H1 (cell line): ENCODE measurements at regions of chr1 and their contacts with region 1.

Region 1: GRCh38 chr1:90616395-90616794 is 100.7 kb downstream of the BARHL2 start:
- DNase-seq: peak; percentile 25 to 69
- H3K4me3 ChIP-seq: no peak overlapping the region
- H3K27ac ChIP-seq: no peak overlapping the region
- H3K4me1 ChIP-seq: peaks cover 0 to 8% (median 3%) of the 10 kb centered on the region in 4 experiments; a peak in 2 of 7 replicates
- H3K27me3 ChIP-seq: no peaks in the 10 kb centered on the region; a peak in 1 of 7 replicates
- CTCF ChIP-seq: peak; percentile 63 to 75 (median 66)
- EP300 ChIP-seq: no peak
- POLR2A ChIP-seq: no peak
- RAD21 ChIP-seq: peak; percentile 65 to 72

Region 2: DNA sequence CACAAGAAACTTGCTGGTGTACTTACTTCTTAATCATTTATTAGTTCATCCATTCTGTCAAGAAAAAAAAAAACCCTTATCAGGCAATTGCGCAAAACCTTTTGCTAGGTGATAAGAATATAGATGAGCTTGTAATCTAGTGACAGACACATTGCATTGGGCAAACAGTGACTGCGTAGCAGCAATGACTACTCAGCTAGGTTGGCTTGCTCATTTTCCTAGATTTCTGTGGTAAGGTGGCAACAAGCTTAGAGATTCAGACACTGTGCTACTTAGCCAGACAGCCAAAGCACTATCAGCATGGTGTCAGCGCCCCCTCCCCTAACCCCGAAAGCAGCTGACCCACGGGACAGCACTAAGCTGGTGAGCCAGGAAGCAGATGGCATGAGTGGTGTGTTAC is 102.4 kb before region 1 on chr1:
- CTCF ChIA-PET with region 1: no interaction called
- POLR2A ChIA-PET with region 1: no interaction called
- DNase-seq: no peak
- H3K4me3 ChIP-seq: no peak overlapping the region
- H3K27ac ChIP-seq: no peak overlapping the region
- H3K4me1 ChIP-seq: no peaks in the 10 kb centered on the region; a peak in 2 of 7 replicates
- H3K27me3 ChIP-seq: no peaks in the 10 kb centered on the region
- CTCF ChIP-seq: no peak
- EP300 ChIP-seq: no peak
- POLR2A ChIP-seq: no peak
- RAD21 ChIP-seq: no peak

Region 3: DNA sequence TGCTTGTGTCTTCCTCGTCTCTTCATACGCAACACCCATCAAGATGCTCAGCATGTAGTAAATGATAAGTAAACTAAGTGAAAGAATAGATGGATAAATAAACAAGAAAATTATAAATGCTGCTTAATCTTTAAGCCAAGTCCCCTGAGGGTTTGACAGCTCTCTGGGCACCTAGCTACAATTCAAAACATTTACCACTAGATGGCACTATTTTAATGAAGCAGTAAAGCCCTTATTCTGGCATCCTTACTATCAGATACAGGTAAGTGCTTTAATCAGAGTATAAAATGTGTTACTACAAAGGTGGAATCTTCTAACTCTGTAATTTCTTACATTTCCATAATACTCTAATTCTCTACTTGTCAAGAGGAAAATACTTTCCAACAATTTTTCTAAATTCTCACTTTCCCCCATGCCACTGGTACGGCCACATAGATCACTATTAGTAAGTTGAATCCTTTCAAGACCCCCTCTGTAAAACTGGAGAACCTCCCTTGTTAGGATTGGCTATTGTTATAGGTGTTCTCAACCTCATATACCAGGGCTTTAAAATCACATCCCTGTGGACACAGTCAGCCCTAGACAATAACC is 37.1 kb before region 1 on chr1:
- CTCF ChIA-PET with region 1: interaction called, 10 read pairs
- POLR2A ChIA-PET with region 1: no interaction called
- DNase-seq: no peak
- H3K4me3 ChIP-seq: no peak overlapping the region
- H3K27ac ChIP-seq: no peak overlapping the region
- H3K4me1 ChIP-seq: no peaks in the 10 kb centered on the region
- H3K27me3 ChIP-seq: no peaks in the 10 kb centered on the region
- CTCF ChIP-seq: peak in 2 of 3 experiments; percentile 42 to 60; a peak in 2 of 4 replicates
- EP300 ChIP-seq: no peak
- POLR2A ChIP-seq: no peak
- RAD21 ChIP-seq: peak; percentile 47 to 53

Region 4: DNA sequence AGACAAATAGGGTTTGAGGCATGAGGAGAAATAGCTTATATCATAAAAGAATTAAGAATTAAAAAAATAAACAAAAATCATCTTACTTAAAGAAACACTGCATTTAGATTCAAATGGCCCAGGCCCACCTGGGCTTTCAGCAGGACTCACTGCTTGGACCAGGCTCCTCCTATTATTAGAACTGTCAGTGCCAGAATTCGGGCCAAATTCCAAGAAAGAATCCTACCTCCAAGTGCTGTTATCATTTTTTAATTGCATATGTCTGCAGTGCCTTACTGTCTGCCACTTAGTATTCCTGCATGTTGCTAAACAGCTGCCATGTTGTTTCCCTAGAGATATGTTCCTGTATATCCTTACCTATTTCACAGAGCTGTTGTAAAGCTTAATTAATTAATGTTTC is 11.3 kb before region 1 on chr1:
- CTCF ChIA-PET with region 1: interaction called, 23 read pairs
- POLR2A ChIA-PET with region 1: no interaction called
- DNase-seq: no peak
- H3K4me3 ChIP-seq: no peak overlapping the region
- H3K27ac ChIP-seq: no peak overlapping the region
- H3K4me1 ChIP-seq: no peaks in the 10 kb centered on the region
- H3K27me3 ChIP-seq: no peaks in the 10 kb centered on the region
- CTCF ChIP-seq: no peak
- EP300 ChIP-seq: no peak
- POLR2A ChIP-seq: no peak
- RAD21 ChIP-seq: no peak

Region 5: DNA sequence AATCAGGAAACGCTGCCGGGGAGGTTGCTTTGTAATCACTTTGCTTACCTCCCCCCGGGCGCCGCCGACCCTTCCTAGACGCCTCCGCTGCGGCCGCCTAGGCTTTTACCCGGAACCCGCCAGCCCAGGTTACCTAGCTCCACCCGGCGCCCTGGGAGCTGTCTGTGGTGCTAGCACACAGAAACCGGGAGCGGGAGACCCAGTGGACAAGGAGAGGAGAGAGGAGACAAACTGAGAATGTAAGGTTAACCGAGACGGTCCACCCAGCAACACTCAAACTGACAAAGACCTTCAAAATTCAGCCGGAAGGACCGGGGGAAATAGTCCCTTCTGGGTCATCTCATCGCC is 90.9 kb after region 1 on chr1:
- CTCF ChIA-PET with region 1: interaction called, 10 read pairs
- POLR2A ChIA-PET with region 1: no interaction called
- DNase-seq: peak in 1 of 2 experiments; percentile 88
- H3K4me3 ChIP-seq: peak overlapping the region in 3 of 4 experiments; percentile 23 to 54 (median 27); a peak in 4 of 8 replicates
- H3K27ac ChIP-seq: no peak overlapping the region
- H3K4me1 ChIP-seq: peaks cover 8 to 25% (median 18%) of the 10 kb centered on the region in 4 experiments
- H3K27me3 ChIP-seq: peaks cover 68 to 87% (median 80%) of the 10 kb centered on the region in 4 experiments
- CTCF ChIP-seq: no peak
- EP300 ChIP-seq: no peak
- POLR2A ChIP-seq: no peak
- RAD21 ChIP-seq: 0 out of 4 replicates have a peak, but pooled peaks of 1 of the 2 experiments have one; percentile 5

Region 6: GRCh38 chr1:90753556-90753955 is 137.2 kb after region 1 on chr1:
- CTCF ChIA-PET with region 1: no interaction called
- POLR2A ChIA-PET with region 1: no interaction called
- DNase-seq: no peak
- H3K4me3 ChIP-seq: no peak overlapping the region
- H3K27ac ChIP-seq: no peak overlapping the region
- H3K4me1 ChIP-seq: no peaks in the 10 kb centered on the region
- H3K27me3 ChIP-seq: no peaks in the 10 kb centered on the region
- CTCF ChIP-seq: no peak
- EP300 ChIP-seq: no peak
- POLR2A ChIP-seq: no peak
- RAD21 ChIP-seq: no peak